Naive thymus-derived CD4-positive, alpha-beta T cell (primary cell): ENCODE measurements at regions of chr3 and their contacts with region 1.

Region 1: DNA sequence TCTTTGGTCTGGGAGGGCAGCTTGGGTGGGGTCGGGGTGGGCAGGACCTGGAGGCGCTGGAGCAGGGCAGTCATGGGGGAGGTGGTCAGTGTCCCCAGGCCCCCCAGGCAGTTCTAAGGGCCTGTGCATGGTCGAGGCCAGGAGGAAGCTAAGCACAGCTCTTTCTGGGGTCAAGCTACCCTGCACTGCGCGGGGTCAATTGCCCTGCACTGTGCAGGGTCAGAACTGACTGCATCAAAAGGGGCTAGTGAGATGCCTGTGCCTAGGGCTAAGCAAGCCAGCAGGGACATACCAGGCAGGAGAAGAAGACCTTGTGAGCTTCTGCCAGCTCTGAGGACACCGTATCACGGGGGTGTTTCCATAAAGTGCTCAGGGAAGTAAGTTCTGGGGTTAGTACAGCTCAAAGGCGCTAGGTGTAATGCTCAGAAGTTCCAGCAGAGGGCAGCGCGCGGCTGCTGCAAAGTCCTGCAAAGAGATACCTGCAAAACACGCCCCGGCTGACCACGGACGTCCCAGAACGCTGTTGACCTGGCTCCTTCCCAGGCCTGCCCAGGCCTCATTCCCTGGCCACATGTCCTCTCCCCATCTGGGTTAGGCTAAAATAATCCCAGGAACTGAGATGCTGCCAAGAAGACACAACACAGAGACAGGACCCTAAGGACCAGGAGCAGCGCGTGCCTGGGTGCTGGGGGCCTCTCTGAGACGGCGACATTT is 18.8 kb upstream of the IQSEC1 start:
- DNase-seq: peak; percentile 51 to 82 (median 71)
- ATAC-seq: peak; percentile 88
- H3K4me3 ChIP-seq: no peak overlapping the region
- H3K4me3 Mint-ChIP-seq: no peak overlapping the region
- H3K27ac ChIP-seq: no peak overlapping the region
- H3K27ac Mint-ChIP-seq: peak overlapping the region in 1 of 9 donors; percentile 36
- H3K4me1 ChIP-seq: no peaks in the 10 kb centered on the region
- H3K4me1 Mint-ChIP-seq: peaks cover 0 to 14% (median 4%) of the 10 kb centered on the region in 7 donors
- H3K27me3 ChIP-seq: no peaks in the 10 kb centered on the region
- H3K27me3 Mint-ChIP-seq: peaks cover 0 to 17% (median 12%) of the 10 kb centered on the region in 5 donors

Region 2: DNA sequence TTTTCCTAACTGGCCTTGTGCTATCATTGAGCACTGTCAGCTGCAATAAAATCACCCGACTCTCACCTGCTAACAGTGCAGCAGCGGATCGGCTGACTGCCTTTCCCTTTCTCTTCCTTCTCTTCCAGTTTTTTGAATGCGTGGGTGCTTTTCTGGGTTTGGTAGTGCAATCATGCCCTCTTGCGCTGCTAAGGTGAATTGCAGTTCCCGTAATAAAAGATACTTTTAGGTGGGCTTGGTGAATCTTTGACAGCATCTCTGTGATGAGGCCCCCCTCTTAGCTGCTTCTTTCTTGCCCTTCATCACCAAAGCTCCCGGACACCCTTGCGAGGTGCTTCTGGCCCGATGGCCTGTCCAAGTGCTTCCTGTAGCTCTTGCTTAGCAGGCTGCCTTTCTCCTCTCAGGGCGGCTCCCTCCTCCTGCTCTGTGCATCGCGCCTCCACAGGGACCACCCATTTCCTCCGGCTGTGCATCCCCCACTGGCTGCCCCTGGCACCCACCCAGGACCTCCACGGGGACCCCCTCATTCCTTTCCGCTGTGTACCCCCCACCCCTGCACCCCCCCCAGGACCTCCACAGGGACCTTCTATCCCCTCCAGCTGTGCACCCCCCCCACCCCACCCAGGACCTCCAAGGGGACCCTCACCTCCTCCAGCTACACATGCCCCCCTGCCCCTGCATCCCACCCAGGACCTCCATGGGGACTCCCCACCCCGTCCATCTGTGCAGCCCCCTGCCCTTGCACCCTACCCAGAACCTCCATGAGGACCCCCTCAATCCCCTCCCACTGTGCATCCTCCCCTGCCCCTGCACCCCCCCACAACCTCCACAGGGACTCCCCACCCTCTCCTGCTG is 199.8 kb before region 1 on chr3:
- CTCF ChIA-PET with region 1: no interaction called
- POLR2A ChIA-PET with region 1: no interaction called
- intact Hi-C with region 1: no loop called
- DNase-seq: peak in 8 of 9 donors; percentile 29 to 57 (median 50)
- ATAC-seq: peak; percentile 65
- H3K4me3 ChIP-seq: peak overlapping the region; percentile 19
- H3K4me3 Mint-ChIP-seq: peak overlapping the region in 9 of 10 donors; percentile 12 to 75 (median 58)
- H3K27ac ChIP-seq: no peak overlapping the region
- H3K27ac Mint-ChIP-seq: peak overlapping the region in 3 of 9 donors; percentile 9 to 47 (median 12)
- H3K4me1 ChIP-seq: peaks cover 0 to 7% of the 10 kb centered on the region in 2 donors
- H3K4me1 Mint-ChIP-seq: peaks cover 6 to 14% (median 12%) of the 10 kb centered on the region in 7 donors
- H3K27me3 ChIP-seq: no peaks in the 10 kb centered on the region
- H3K27me3 Mint-ChIP-seq: peaks cover 0 to 38% (median 14%) of the 10 kb centered on the region in 5 donors

Region 3: DNA sequence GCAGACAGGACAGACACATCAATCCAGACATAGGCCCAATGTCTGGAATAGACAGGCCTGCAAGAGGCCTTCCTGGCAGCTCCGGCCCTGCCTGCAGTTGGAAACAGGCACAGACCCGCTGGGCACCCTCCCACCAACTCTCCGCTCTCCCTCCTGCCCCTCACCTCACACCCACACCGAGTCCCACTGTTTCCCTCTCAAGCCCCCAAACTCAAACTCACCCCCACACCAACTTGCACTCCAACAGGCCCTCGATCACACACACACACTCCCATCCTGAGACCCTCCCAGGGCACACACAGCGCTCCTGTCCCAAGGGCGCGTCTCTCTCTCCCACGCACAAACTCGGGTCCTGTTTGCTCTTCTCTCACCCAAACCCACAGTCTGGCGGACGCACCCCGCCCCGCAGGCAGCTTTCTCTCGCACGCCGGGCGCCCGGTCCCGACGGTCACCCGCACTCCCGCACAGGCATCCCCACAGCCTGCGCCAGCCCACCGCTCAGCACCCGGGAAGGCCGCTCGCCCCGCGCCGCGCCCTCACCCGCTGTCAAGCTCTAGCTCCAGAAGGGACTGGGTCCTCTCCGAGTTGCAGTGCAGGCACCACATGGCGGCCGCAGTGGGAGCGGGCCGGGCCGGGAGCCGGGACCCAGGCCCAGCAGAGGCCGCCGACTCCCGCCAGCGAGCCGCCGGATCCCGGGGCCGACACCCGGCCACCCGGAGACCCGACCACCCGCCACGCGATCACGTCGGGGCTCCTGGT is 125.0 kb before region 1 on chr3:
- CTCF ChIA-PET with region 1: no interaction called
- POLR2A ChIA-PET with region 1: no interaction called
- intact Hi-C with region 1: no loop called
- DNase-seq: peak in 2 of 9 donors; percentile 27 to 43
- ATAC-seq: no peak
- H3K4me3 ChIP-seq: no peak overlapping the region
- H3K4me3 Mint-ChIP-seq: peak overlapping the region; percentile 63 to 88 (median 82)
- H3K27ac ChIP-seq: peak overlapping the region; percentile 29
- H3K27ac Mint-ChIP-seq: peak overlapping the region in 6 of 9 donors; percentile 23 to 86 (median 66)
- H3K4me1 ChIP-seq: peaks cover 48 to 52% of the 10 kb centered on the region in 2 donors
- H3K4me1 Mint-ChIP-seq: peaks cover 51 to 87% (median 82%) of the 10 kb centered on the region in 7 donors
- H3K27me3 ChIP-seq: no peaks in the 10 kb centered on the region
- H3K27me3 Mint-ChIP-seq: peaks cover 0 to 5% (median 0%) of the 10 kb centered on the region in 5 donors

Region 4: GRCh38 chr3:13282986-13283876 is 191.2 kb after region 1 on chr3:
- CTCF ChIA-PET with region 1: no interaction called
- POLR2A ChIA-PET with region 1: no interaction called
- intact Hi-C with region 1: loop called in 1 of 2 experiments (anchors 5 kb)
- DNase-seq: peak in 1 of 9 donors; percentile 48
- ATAC-seq: peak; percentile 57
- H3K4me3 ChIP-seq: no peak overlapping the region
- H3K4me3 Mint-ChIP-seq: peak overlapping the region; percentile 40 to 81 (median 73)
- H3K27ac ChIP-seq: no peak overlapping the region
- H3K27ac Mint-ChIP-seq: no peak overlapping the region
- H3K4me1 ChIP-seq: no peaks in the 10 kb centered on the region
- H3K4me1 Mint-ChIP-seq: peaks cover 5 to 17% (median 11%) of the 10 kb centered on the region in 7 donors
- H3K27me3 ChIP-seq: peaks cover 0 to 21% of the 10 kb centered on the region in 2 donors
- H3K27me3 Mint-ChIP-seq: peaks cover 50 to 70% (median 53%) of the 10 kb centered on the region in 5 donors

Region 5: GRCh38 chr3:13308380-13308801 is 216.3 kb after region 1 on chr3:
- CTCF ChIA-PET with region 1: no interaction called
- POLR2A ChIA-PET with region 1: no interaction called
- intact Hi-C with region 1: loop called in 1 of 2 experiments (anchors 10 kb)
- DNase-seq: peak in 5 of 9 donors; percentile 21 to 40 (median 34)
- ATAC-seq: peak; percentile 68
- H3K4me3 ChIP-seq: no peak overlapping the region
- H3K4me3 Mint-ChIP-seq: no peak overlapping the region
- H3K27ac ChIP-seq: no peak overlapping the region
- H3K27ac Mint-ChIP-seq: peak overlapping the region in 6 of 9 donors; percentile 12 to 82 (median 24)
- H3K4me1 ChIP-seq: no peaks in the 10 kb centered on the region
- H3K4me1 Mint-ChIP-seq: peaks cover 0 to 9% (median 7%) of the 10 kb centered on the region in 7 donors
- H3K27me3 ChIP-seq: no peaks in the 10 kb centered on the region
- H3K27me3 Mint-ChIP-seq: no peaks in the 10 kb centered on the region

Region 6: DNA sequence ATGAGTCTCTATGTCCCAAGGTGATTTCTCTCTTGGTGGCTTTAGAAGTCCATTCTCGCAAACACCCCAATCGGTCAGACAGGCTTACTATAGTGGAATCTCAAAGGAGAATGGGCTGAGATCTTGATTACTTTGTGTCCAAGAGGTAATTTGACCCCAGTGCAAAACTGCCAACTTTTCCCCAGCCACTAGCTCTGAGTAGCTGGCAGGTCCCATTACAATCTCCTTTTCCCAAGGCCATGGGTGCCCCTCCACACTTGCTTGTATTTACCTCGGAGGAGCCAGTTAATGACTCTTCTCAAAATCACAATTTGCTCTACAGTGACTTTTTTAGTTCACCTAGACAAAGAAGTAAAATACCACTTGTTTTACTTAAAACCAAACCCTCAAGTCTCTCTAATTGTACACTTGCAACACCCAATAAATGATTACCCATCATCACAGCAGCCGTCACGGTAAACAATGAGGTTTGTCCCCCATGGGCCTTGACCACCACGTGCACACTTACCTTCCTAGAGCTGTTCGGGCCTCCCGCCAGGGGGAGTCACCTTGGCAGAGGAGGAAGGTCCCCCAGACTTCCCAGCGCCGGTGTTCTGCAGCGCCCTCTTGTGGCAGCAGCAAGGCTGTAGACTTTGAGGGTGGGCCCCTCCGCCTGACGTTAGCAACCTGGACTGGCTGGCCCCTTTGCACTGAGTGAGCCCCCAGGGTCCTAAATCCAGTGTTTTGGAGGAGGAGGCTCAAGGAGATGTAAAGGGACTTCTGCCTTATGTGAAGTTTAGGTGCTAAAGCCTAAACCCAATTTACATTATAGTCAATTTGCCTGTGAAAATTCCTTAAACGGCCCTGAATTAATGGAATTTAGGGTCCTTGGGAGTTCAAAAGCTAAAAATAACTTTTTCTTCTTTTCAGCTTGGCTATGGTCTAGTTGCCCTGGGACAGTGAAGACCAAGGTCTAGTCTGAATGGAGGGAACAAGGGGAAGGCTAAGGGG is 369.4 kb after region 1 on chr3:
- CTCF ChIA-PET with region 1: interaction called, 23 read pairs
- POLR2A ChIA-PET with region 1: no interaction called
- intact Hi-C with region 1: loop called (anchors 1 kb)
- DNase-seq: peak; percentile 53 to 77 (median 67)
- ATAC-seq: peak; percentile 92
- H3K4me3 ChIP-seq: no peak overlapping the region
- H3K4me3 Mint-ChIP-seq: peak overlapping the region in 1 of 10 donors; percentile 34
- H3K27ac ChIP-seq: no peak overlapping the region
- H3K27ac Mint-ChIP-seq: no peak overlapping the region
- H3K4me1 ChIP-seq: no peaks in the 10 kb centered on the region
- H3K4me1 Mint-ChIP-seq: peaks cover 0 to 5% (median 4%) of the 10 kb centered on the region in 7 donors
- H3K27me3 ChIP-seq: no peaks in the 10 kb centered on the region
- H3K27me3 Mint-ChIP-seq: peaks cover 0 to 26% (median 8%) of the 10 kb centered on the region in 5 donors

Region 7: GRCh38 chr3:13495921-13496723 is 404.1 kb after region 1 on chr3:
- CTCF ChIA-PET with region 1: no interaction called
- POLR2A ChIA-PET with region 1: no interaction called
- intact Hi-C with region 1: loop called in 1 of 2 experiments (anchors 1 kb)
- DNase-seq: peak; percentile 47 to 73 (median 66)
- ATAC-seq: peak; percentile 89
- H3K4me3 ChIP-seq: no peak overlapping the region
- H3K4me3 Mint-ChIP-seq: no peak overlapping the region
- H3K27ac ChIP-seq: no peak overlapping the region
- H3K27ac Mint-ChIP-seq: no peak overlapping the region
- H3K4me1 ChIP-seq: no peaks in the 10 kb centered on the region
- H3K4me1 Mint-ChIP-seq: peaks cover 0 to 7% (median 3%) of the 10 kb centered on the region in 7 donors
- H3K27me3 ChIP-seq: no peaks in the 10 kb centered on the region
- H3K27me3 Mint-ChIP-seq: no peaks in the 10 kb centered on the region

Region 8: DNA sequence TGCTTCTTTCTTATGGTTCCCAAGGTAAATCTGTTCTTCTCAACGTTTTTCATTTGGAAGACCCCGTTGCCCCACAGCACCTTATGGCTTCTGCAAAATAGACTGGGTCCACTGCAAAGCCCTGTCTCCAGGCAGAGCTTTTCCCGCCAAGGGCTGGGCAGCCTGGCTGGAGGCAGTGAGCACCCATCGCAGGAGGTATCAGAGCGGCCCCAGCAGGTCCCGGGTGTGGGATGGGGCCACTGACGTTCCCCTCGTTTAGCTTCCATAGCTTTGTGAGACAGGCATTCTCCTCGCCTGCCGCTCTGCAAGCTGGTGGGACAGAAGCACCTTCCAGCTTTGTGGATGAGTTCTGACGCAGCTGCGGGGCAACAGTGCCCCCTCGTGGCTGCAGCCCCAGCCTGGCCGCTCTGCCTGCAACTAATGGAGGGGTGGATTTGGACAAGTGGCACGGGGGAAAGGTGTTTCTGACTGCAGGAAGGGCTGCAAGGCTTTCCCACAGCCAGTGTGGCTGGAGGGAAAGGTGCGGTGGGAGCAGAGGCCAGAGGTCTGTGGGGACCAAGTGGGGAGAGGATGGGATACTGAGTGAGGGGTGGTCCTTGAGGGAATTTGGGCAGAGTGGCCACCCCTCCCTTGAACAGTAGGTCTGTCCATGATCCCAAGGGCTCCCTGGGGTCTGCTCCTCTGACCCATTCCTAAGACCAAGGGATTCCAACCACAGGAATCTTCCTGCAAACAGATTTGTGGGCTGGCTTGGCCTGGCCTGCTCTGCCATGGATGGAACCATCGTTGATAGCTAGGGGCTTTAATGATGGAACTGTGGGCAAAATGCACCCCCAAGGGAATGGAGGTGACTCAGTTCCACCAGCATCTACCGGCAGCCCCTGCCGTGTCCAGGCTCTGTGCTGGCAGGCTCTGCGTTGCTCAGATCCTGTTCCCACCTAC is 556.3 kb after region 1 on chr3:
- CTCF ChIA-PET with region 1: interaction called, 24 read pairs
- POLR2A ChIA-PET with region 1: no interaction called
- intact Hi-C with region 1: loop called in 1 of 2 experiments (anchors 1 kb)
- DNase-seq: peak; percentile 50 to 82 (median 72)
- ATAC-seq: peak; percentile 62
- H3K4me3 ChIP-seq: no peak overlapping the region
- H3K4me3 Mint-ChIP-seq: peak overlapping the region in 7 of 10 donors; percentile 17 to 64 (median 41)
- H3K27ac ChIP-seq: no peak overlapping the region
- H3K27ac Mint-ChIP-seq: peak overlapping the region in 2 of 9 donors; percentile 57 to 87
- H3K4me1 ChIP-seq: peaks cover 9 to 12% of the 10 kb centered on the region in 2 donors
- H3K4me1 Mint-ChIP-seq: peaks cover 14 to 40% (median 23%) of the 10 kb centered on the region in 7 donors
- H3K27me3 ChIP-seq: no peaks in the 10 kb centered on the region
- H3K27me3 Mint-ChIP-seq: peaks cover 15 to 48% (median 20%) of the 10 kb centered on the region in 5 donors

Region 9: DNA sequence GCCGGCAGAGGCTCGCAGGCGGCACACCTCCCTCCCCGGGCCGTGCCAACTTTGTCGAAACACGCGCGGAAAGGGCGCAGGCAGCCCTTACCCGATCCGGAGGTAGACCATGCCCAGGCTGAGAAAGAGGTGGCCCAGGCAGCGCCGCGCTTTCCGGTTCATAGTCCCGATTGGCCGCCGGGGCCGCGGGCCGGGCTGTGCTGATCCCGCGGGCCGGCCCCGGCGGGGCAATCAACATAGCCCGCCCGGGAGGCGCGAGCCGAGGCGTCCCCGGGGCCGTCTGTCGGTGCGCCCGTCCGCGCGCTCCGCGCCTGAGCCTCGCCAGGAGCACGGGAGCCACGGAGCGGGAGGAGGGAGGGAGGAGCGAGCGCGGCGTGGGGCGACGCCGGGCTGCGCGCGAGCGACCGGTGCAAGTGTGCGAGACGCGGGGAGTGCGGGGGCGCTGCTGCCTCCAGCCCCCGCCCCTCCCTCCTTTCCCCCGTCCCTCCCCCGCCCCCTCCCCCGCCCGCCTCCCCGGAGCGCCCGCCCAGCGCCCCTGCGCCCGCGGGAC is 787.7 kb after region 1 on chr3 and contains the start of gene WNT7A:
- CTCF ChIA-PET with region 1: no interaction called
- POLR2A ChIA-PET with region 1: no interaction called
- intact Hi-C with region 1: loop called in 1 of 2 experiments (anchors 5 kb)
- DNase-seq: peak in 5 of 9 donors; percentile 33 to 70 (median 49)
- ATAC-seq: peak; percentile 38
- H3K4me3 ChIP-seq: peak within 1 kb of the TSS; percentile 75
- H3K4me3 Mint-ChIP-seq: peak within 1 kb of the TSS; percentile 50 to 95 (median 92)
- H3K27ac ChIP-seq: peak within 1 kb of the TSS; percentile 75
- H3K27ac Mint-ChIP-seq: peak within 1 kb of the TSS in 7 of 9 donors; percentile 45 to 92 (median 82)
- H3K4me1 ChIP-seq: peaks cover 5 to 6% of the 10 kb centered on the region in 2 donors
- H3K4me1 Mint-ChIP-seq: peaks cover 0 to 29% (median 23%) of the 10 kb centered on the region in 7 donors
- H3K27me3 ChIP-seq: peaks cover 0 to 6% of the 10 kb centered on the region in 2 donors
- H3K27me3 Mint-ChIP-seq: peaks cover 0 to 78% (median 34%) of the 10 kb centered on the region in 5 donors
- total RNA-seq, gene WNT7A: 0.15 to 21.8 (median 18.8) TPM